Mammary epithelial cell (primary cell): ENCODE measurements at regions of chr5 and their contacts with region 1.

Region 1: GRCh38 chr5:19608444-19609002 is 379.5 kb downstream of the CDH18 start:
- DNase-seq: peak; percentile 6
- H3K4me3 ChIP-seq: no peak overlapping the region
- H3K27ac ChIP-seq: no peak overlapping the region
- H3K4me1 ChIP-seq: peaks cover 5% of the 10 kb centered on the region
- H3K27me3 ChIP-seq: no peaks in the 10 kb centered on the region
- CTCF ChIP-seq: peak; percentile 48 to 54

Region 2: DNA sequence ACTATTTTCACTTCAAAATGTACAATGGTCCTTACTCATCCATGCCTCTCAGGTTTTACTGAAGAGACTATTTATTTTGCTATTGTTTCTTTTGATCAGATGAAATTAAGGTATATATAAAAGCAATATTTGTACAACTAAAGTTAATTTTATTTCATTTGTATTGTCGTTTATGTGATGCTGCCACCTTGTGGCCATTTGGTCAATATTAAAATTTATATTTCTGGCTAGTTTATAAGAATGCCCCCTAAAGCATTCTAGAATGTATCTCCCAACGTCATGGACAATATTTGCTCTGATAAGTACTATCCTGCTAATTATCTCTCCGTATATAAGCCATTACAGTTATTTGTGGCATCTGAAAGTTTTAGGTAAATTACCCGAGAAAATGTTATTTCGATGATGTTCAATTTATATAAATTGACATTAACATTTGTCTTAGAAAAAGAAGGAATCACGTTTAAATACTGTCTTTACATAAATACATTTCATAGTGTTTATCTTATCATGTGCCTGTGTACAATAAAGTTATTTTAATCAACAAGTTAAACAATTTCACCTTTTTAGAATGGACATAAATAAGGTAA is 1294.2 kb before region 1 on chr5:
- CTCF ChIA-PET with region 1: interaction called, 11 read pairs
- dilution Hi-C with region 1: no loop called
- in situ Hi-C with region 1: no loop called
- intact Hi-C with region 1: no loop called
- DNase-seq: no peak
- H3K4me3 ChIP-seq: no peak overlapping the region
- H3K27ac ChIP-seq: no peak overlapping the region
- H3K4me1 ChIP-seq: no peaks in the 10 kb centered on the region
- H3K27me3 ChIP-seq: no peaks in the 10 kb centered on the region
- CTCF ChIP-seq: peak; percentile 34 to 45

Region 3: DNA sequence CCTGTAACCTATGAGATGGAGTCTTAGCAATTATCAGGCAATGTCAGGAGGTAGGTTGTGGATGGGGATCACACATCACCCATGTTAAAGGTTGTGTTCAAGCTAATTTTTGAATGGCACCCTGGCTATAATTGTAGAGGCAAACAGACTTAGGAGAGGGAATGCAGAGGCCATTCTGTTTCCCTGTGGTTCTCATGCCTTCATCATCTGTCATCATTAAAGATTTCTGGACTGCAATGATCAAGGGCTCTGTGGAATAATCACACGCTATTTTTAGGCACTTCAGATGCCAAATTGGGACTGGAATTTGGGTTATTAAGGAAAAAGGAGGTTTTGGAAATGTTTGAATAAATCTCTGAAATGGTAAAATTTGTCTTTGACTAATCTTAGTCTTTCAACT is 908.8 kb before region 1 on chr5:
- CTCF ChIA-PET with region 1: no interaction called
- dilution Hi-C with region 1: no loop called
- in situ Hi-C with region 1: no loop called
- intact Hi-C with region 1: loop called (anchors 10 kb)
- DNase-seq: no peak
- H3K4me3 ChIP-seq: no peak overlapping the region
- H3K27ac ChIP-seq: no peak overlapping the region
- H3K4me1 ChIP-seq: no peaks in the 10 kb centered on the region
- H3K27me3 ChIP-seq: no peaks in the 10 kb centered on the region
- CTCF ChIP-seq: no peak

Region 4: DNA sequence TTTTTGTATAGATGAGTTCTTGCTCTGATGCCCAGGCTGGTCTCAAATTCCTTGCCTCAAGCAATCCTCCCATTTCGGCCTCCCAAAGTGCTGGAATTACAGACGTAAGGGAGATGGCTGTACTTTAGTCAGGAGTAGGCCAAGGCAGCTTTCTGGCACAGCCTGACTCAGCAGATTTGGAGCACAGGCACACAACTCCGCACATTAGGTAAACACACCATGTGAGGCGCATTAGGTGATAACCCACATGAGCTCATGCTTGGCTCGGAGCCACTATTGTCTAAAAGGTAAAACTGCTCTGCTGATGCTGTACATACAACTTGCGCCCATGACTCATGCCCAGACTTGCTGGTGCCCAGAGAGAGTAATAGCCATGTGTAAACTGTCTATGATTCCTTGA is 816.4 kb before region 1 on chr5:
- CTCF ChIA-PET with region 1: interaction called, 3 read pairs
- dilution Hi-C with region 1: no loop called
- in situ Hi-C with region 1: loop called in 1 of 2 experiments (anchors 25 kb)
- intact Hi-C with region 1: no loop called
- DNase-seq: peak; percentile 99
- H3K4me3 ChIP-seq: no peak overlapping the region
- H3K27ac ChIP-seq: peak overlapping the region; percentile 55
- H3K4me1 ChIP-seq: peaks cover 5% of the 10 kb centered on the region
- H3K27me3 ChIP-seq: no peaks in the 10 kb centered on the region
- CTCF ChIP-seq: no peak

Region 5: GRCh38 chr5:19314851-19315327 is 293.6 kb before region 1 on chr5:
- CTCF ChIA-PET with region 1: no interaction called
- dilution Hi-C with region 1: no loop called
- in situ Hi-C with region 1: no loop called
- intact Hi-C with region 1: loop called (anchors 5 kb)
- DNase-seq: peak; percentile 89
- H3K4me3 ChIP-seq: no peak overlapping the region
- H3K27ac ChIP-seq: peak overlapping the region; percentile 56
- H3K4me1 ChIP-seq: peaks cover 7% of the 10 kb centered on the region
- H3K27me3 ChIP-seq: no peaks in the 10 kb centered on the region
- CTCF ChIP-seq: peak; percentile 41 to 60

Region 6: GRCh38 chr5:19496056-19496455 is 112.5 kb before region 1 on chr5:
- CTCF ChIA-PET with region 1: no interaction called
- dilution Hi-C with region 1: no loop called
- in situ Hi-C with region 1: no loop called
- intact Hi-C with region 1: no loop called
- DNase-seq: peak; percentile 36
- H3K4me3 ChIP-seq: no peak overlapping the region
- H3K27ac ChIP-seq: no peak overlapping the region
- H3K4me1 ChIP-seq: peaks cover 3% of the 10 kb centered on the region
- H3K27me3 ChIP-seq: no peaks in the 10 kb centered on the region
- CTCF ChIP-seq: no peak

Region 7: DNA sequence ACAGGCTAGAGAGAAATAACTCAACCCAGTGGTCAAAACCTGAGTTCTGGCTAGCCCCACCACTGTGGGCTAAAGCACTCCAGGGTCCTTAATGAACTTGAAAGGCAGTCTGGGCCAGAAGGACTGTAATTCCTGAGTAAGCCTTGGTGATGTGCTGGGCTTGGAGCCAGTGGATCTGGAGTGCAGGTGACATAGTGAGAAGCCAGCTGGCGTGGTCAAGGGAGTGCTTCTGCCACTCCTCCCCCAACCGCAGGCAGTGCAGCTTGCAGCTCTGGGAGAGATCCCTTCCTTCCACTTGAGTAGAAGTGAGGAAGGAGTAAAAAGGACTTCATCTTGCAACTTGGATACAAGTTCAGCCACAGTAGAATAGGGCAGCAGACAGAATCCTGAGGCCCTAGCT is 44.5 kb before region 1 on chr5:
- CTCF ChIA-PET with region 1: no interaction called
- dilution Hi-C with region 1: no loop called
- in situ Hi-C with region 1: no loop called
- intact Hi-C with region 1: no loop called
- DNase-seq: no peak
- H3K4me3 ChIP-seq: no peak overlapping the region
- H3K27ac ChIP-seq: no peak overlapping the region
- H3K4me1 ChIP-seq: no peaks in the 10 kb centered on the region
- H3K27me3 ChIP-seq: no peaks in the 10 kb centered on the region
- CTCF ChIP-seq: no peak

Region 8: GRCh38 chr5:19685473-19685872 is 77.0 kb after region 1 on chr5:
- CTCF ChIA-PET with region 1: no interaction called
- dilution Hi-C with region 1: no loop called
- in situ Hi-C with region 1: no loop called
- intact Hi-C with region 1: no loop called
- DNase-seq: no peak
- H3K4me3 ChIP-seq: no peak overlapping the region
- H3K27ac ChIP-seq: no peak overlapping the region
- H3K4me1 ChIP-seq: no peaks in the 10 kb centered on the region
- H3K27me3 ChIP-seq: no peaks in the 10 kb centered on the region
- CTCF ChIP-seq: no peak